CD4-positive, alpha-beta T cell (primary cell): ENCODE measurements at regions of chr12 and their contacts with region 1.

Region 1: DNA sequence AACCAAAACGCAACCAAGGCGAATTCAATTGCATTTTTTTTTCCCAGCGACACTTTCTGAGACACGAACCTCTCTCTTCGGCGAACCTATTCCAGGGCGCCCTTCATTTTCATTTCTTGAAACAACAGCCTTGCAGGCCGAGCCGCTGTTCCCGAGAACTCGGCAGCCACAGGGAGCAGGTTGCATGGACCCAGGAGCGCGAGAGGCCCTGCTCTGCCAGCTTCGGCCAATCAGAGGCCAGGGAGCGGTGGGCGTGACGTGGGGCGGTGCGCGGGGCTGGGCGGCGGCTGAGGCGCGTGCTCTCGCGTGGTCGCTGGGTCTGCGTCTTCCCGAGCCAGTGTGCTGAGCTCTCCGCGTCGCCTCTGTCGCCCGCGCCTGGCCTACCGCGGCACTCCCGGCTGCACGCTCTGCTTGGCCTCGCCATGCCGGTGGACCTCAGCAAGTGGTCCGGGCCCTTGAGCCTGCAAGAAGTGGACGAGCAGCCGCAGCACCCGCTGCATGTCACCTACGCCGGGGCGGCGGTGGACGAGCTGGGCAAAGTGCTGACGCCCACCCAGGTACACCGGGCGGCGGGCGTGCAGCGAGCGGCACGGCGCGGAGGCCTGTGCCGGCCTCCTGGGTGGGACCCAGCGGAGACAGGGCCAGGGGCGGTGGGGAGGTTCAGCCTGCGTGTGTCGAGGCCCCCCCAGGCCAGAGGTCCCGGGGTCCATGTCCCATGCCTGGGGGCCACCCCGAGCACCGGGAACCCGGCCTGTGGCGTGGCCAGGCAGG is at the start of gene PEBP1:
- DNase-seq: peak; percentile 85 to 95 (median 92)
- ATAC-seq: peak; percentile 99
- H3K4me3 ChIP-seq: peak within 1 kb of the TSS; percentile 91
- H3K4me3 Mint-ChIP-seq: peak within 1 kb of the TSS; percentile 98
- H3K27ac ChIP-seq: peak within 1 kb of the TSS; percentile 41 to 42
- H3K27ac Mint-ChIP-seq: peak within 1 kb of the TSS; percentile 92
- H3K4me1 ChIP-seq: peaks cover 33% of the 10 kb centered on the region
- H3K4me1 Mint-ChIP-seq: peaks cover 41% of the 10 kb centered on the region
- H3K27me3 ChIP-seq: no peaks in the 10 kb centered on the region
- H3K27me3 Mint-ChIP-seq: no peaks in the 10 kb centered on the region
- CTCF ChIP-seq: no peak
- total RNA-seq, gene PEBP1: 116 to 119 TPM

Region 2: DNA sequence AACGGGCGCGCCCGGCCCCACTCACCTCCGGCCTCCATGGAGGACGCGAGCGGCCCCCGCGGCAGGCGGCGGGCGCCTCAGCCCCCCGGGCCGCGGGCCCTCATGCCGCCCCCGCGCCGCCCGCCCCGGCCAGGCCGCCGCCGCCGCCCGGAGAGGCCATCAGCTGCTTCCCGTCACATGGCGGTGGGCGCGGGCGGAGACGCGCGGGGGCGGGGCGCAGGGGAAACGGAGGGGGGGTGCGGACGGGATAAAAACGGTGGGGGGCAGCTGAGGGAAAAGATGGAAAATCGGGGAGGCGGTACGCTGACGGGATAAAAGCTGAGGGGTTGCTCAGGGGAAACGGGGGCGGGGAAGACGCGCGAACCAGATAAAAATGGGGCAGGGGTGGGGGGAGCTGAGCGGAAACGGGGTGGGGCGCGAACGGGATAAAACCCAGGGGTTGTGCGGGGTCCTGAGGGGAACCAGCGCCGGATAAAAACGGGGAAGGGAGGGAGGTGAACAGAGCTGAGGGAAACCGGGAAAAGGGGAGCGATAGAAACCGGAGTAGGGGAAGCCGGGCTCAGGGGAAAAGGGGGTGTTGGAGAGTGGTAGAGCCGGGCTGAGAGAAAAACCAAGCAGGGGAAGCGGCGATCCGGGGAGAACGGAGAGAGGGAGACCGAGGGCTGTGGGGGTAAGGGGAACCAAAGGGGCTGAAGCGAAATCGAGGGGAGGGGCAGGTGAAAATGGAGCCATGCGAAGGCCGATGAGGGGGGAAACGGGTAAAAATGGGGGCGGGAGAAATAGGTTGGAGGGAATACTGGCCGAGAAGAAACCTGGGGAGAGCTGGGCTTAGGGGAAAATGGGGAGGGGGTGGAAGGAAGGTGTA is 74.7 kb before region 1 on chr12 and contains the start of gene WSB2:
- CTCF ChIA-PET with region 1: no interaction called
- POLR2A ChIA-PET with region 1: interaction called, 28 read pairs
- intact Hi-C with region 1: loop called in 1 of 2 experiments (anchors 5 kb)
- DNase-seq: peak; percentile 16 to 70 (median 42)
- ATAC-seq: peak; percentile 41
- H3K4me3 ChIP-seq: peak within 1 kb of the TSS; percentile 84
- H3K4me3 Mint-ChIP-seq: peak within 1 kb of the TSS; percentile 99
- H3K27ac ChIP-seq: peak within 1 kb of the TSS; percentile 61 to 85
- H3K27ac Mint-ChIP-seq: peak within 1 kb of the TSS; percentile 90
- H3K4me1 ChIP-seq: peaks cover 30% of the 10 kb centered on the region
- H3K4me1 Mint-ChIP-seq: peaks cover 51% of the 10 kb centered on the region
- H3K27me3 ChIP-seq: no peaks in the 10 kb centered on the region
- H3K27me3 Mint-ChIP-seq: peaks cover 4% of the 10 kb centered on the region
- CTCF ChIP-seq: no peak
- total RNA-seq, gene WSB2: 12.0 to 13.4 TPM

Region 3: GRCh38 chr12:118120579-118121363 is 15.2 kb before region 1 on chr12:
- CTCF ChIA-PET with region 1: interaction called, 16 read pairs
- POLR2A ChIA-PET with region 1: interaction called, 10 read pairs
- intact Hi-C with region 1: loop called in 1 of 2 experiments (anchors 1 kb)
- DNase-seq: peak; percentile 35 to 81 (median 54)
- ATAC-seq: peak; percentile 67
- H3K4me3 ChIP-seq: no peak overlapping the region
- H3K4me3 Mint-ChIP-seq: no peak overlapping the region
- H3K27ac ChIP-seq: peak overlapping the region in 1 of 2 donors; percentile 6
- H3K27ac Mint-ChIP-seq: peak overlapping the region; percentile 62
- H3K4me1 ChIP-seq: peaks cover 6% of the 10 kb centered on the region
- H3K4me1 Mint-ChIP-seq: peaks cover 11% of the 10 kb centered on the region
- H3K27me3 ChIP-seq: no peaks in the 10 kb centered on the region
- H3K27me3 Mint-ChIP-seq: no peaks in the 10 kb centered on the region
- CTCF ChIP-seq: peak; percentile 82

Region 4: DNA sequence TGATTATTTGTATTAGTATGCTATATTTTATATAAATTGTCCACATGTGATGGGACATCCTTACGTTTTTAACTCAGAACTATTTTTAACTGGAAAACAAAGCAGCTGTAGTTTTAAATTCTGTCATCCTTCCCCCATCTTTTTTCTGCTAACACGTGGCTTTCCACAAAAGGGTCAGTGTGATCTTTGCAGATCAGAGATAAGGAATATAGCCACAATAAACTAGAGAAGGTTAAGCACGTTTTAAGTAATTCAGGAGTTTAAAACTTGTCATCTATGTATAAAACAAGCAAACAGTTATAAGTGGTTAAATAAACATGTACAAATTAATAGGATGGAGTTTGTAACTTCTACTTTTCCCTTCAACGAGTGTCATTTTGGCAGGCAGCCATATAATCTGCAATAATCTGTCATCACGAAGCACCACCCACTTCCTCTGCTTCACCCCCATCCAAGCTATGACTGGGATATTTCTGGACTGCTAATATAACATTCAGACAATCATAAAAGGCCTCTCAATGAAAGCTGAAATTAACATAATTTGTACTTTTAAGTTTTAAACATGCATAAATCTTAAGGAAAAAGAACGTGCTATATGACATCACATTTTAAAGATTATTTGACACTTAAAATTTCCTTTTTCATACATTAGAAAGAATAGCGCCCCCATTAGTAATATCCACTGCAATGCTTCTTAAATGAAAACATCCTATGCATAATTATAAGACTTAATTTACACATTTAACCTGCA is 221.5 kb after region 1 on chr12:
- CTCF ChIA-PET with region 1: no interaction called
- POLR2A ChIA-PET with region 1: interaction called, 16 read pairs
- intact Hi-C with region 1: no loop called
- DNase-seq: peak in 9 of 14 experiments; percentile 7 to 86 (median 55)
- ATAC-seq: peak; percentile 77
- H3K4me3 ChIP-seq: peak overlapping the region; percentile 6
- H3K4me3 Mint-ChIP-seq: peak overlapping the region; percentile 74
- H3K27ac ChIP-seq: peak overlapping the region in 1 of 2 donors; percentile 70
- H3K27ac Mint-ChIP-seq: peak overlapping the region; percentile 84
- H3K4me1 ChIP-seq: peaks cover 15% of the 10 kb centered on the region
- H3K4me1 Mint-ChIP-seq: peaks cover 63% of the 10 kb centered on the region
- H3K27me3 ChIP-seq: no peaks in the 10 kb centered on the region
- H3K27me3 Mint-ChIP-seq: no peaks in the 10 kb centered on the region
- CTCF ChIP-seq: no peak

Region 5: DNA sequence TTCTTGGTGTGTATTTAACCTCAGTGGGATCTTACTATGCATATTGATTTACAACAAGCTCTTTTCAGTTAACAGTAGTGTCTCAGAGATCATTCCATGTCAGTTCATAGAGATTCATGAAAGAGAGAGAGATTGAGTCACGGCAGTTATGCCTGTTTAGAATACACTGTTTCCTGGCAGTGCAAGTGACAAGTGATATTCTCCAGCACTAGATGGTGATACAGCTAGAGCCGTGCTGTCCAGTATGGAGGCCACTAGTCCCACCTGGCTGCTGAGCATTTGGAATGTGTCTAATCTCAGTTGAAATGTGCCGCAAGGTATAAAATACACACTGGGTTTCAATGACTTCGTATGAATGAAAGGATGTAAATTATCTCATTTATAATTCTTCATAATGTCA is 424.8 kb after region 1 on chr12:
- CTCF ChIA-PET with region 1: no interaction called
- POLR2A ChIA-PET with region 1: no interaction called
- intact Hi-C with region 1: no loop called
- DNase-seq: no peak
- ATAC-seq: no peak
- H3K4me3 ChIP-seq: no peak overlapping the region
- H3K4me3 Mint-ChIP-seq: no peak overlapping the region
- H3K27ac ChIP-seq: no peak overlapping the region
- H3K27ac Mint-ChIP-seq: no peak overlapping the region
- H3K4me1 ChIP-seq: no peaks in the 10 kb centered on the region
- H3K4me1 Mint-ChIP-seq: no peaks in the 10 kb centered on the region
- H3K27me3 ChIP-seq: no peaks in the 10 kb centered on the region
- H3K27me3 Mint-ChIP-seq: no peaks in the 10 kb centered on the region
- CTCF ChIP-seq: no peak